Activated naive CD4-positive, alpha-beta T cell treated with anti-CD3 and anti-CD28 coated beads for 36 hours (primary cell): ENCODE measurements at regions of chr5 and their contacts with region 1.

Region 1: GRCh38 chr5:111278845-111279504 is 54.8 kb downstream of the CAMK4 start:
- DNase-seq: peak; percentile 96
- H3K4me3 Mint-ChIP-seq: peak overlapping the region; percentile 38
- H3K27ac Mint-ChIP-seq: peak overlapping the region; percentile 83
- H3K4me1 Mint-ChIP-seq: peaks cover 67% of the 10 kb centered on the region
- H3K27me3 Mint-ChIP-seq: no peaks in the 10 kb centered on the region

Region 2: DNA sequence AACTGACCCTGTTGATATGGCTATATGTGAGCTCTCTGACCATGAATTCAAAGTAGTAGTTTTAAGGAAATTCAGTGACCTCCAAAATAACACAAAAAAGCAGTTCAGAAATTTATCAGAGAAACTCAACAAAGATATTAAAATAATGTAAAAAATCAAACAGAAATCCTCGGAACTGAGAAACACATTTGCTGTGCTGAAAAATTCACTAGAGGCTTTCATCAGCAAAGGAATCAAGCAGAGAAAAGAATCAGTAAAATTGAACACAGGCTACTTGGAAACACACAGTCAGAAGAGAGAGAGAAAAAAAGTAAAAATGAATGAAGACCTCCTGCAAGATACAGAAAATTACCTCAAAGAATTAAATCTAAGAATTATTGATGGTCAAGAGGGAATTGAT is 969.8 kb before region 1 on chr5:
- CTCF ChIA-PET with region 1: no interaction called
- intact Hi-C with region 1: no loop called
- DNase-seq: no peak
- H3K4me3 Mint-ChIP-seq: no peak overlapping the region
- H3K27ac Mint-ChIP-seq: no peak overlapping the region
- H3K4me1 Mint-ChIP-seq: no peaks in the 10 kb centered on the region
- H3K27me3 Mint-ChIP-seq: peaks cover 3% of the 10 kb centered on the region

Region 3: GRCh38 chr5:110940136-110940535 is 338.8 kb before region 1 on chr5:
- CTCF ChIA-PET with region 1: no interaction called
- intact Hi-C with region 1: no loop called
- DNase-seq: no peak
- H3K4me3 Mint-ChIP-seq: no peak overlapping the region
- H3K27ac Mint-ChIP-seq: no peak overlapping the region
- H3K4me1 Mint-ChIP-seq: no peaks in the 10 kb centered on the region
- H3K27me3 Mint-ChIP-seq: peaks cover 14% of the 10 kb centered on the region

Region 4: DNA sequence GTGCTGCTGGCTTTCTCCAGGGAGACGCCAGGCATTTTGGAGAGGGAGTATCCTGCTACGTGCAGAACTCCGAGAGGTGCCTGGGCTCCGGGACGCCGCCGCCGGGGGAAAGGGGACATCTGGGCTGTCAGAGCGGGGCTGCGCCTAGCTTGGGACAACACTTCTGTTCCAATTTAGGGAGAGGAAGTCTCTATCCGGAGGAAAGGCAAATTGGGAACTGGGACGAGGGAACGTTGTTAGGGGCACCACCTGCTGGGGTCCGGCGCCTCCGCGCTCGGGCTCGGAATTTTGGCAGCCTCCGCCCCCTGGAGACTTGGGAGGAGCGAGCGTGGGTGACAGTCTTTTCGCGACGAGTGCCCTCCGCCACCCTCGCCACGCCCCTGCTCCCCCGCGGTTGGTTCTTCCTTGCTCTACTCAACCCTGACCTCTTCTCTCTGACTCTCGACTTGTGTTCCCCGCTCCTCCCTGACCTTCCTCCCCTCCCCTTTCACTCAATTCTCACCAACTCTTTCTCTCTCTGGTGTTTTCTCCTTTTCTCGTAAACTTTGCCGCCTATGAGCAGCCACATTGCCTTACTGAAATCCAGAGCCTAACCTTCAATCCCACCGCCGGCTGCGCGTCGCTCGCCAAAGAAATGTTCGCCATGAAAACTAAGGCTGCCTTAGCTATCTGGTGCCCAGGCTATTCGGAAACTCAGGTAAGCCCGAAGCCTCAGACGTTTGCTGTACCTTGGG is 205.9 kb before region 1 on chr5:
- CTCF ChIA-PET with region 1: no interaction called
- intact Hi-C with region 1: loop called (anchors 5 kb)
- DNase-seq: peak; percentile 71
- H3K4me3 Mint-ChIP-seq: peak overlapping the region; percentile 88
- H3K27ac Mint-ChIP-seq: no peak overlapping the region
- H3K4me1 Mint-ChIP-seq: peaks cover 30% of the 10 kb centered on the region
- H3K27me3 Mint-ChIP-seq: peaks cover 61% of the 10 kb centered on the region

Region 5: GRCh38 chr5:111169269-111169668 is 109.7 kb before region 1 on chr5:
- CTCF ChIA-PET with region 1: interaction called, 198 read pairs
- intact Hi-C with region 1: no loop called
- DNase-seq: no peak
- H3K4me3 Mint-ChIP-seq: no peak overlapping the region
- H3K27ac Mint-ChIP-seq: no peak overlapping the region
- H3K4me1 Mint-ChIP-seq: peaks cover 3% of the 10 kb centered on the region
- H3K27me3 Mint-ChIP-seq: no peaks in the 10 kb centered on the region

Region 6: GRCh38 chr5:111246459-111246858 is 32.5 kb before region 1 on chr5:
- CTCF ChIA-PET with region 1: interaction called, 10 read pairs
- intact Hi-C with region 1: no loop called
- DNase-seq: no peak
- H3K4me3 Mint-ChIP-seq: peak overlapping the region; percentile 64
- H3K27ac Mint-ChIP-seq: peak overlapping the region; percentile 68
- H3K4me1 Mint-ChIP-seq: peaks cover 79% of the 10 kb centered on the region
- H3K27me3 Mint-ChIP-seq: no peaks in the 10 kb centered on the region

Region 7: GRCh38 chr5:111294551-111294950 is 15.6 kb after region 1 on chr5:
- CTCF ChIA-PET with region 1: interaction called, 11 read pairs
- intact Hi-C with region 1: no loop called
- DNase-seq: no peak
- H3K4me3 Mint-ChIP-seq: no peak overlapping the region
- H3K27ac Mint-ChIP-seq: no peak overlapping the region
- H3K4me1 Mint-ChIP-seq: peaks cover 50% of the 10 kb centered on the region
- H3K27me3 Mint-ChIP-seq: no peaks in the 10 kb centered on the region

Region 8: DNA sequence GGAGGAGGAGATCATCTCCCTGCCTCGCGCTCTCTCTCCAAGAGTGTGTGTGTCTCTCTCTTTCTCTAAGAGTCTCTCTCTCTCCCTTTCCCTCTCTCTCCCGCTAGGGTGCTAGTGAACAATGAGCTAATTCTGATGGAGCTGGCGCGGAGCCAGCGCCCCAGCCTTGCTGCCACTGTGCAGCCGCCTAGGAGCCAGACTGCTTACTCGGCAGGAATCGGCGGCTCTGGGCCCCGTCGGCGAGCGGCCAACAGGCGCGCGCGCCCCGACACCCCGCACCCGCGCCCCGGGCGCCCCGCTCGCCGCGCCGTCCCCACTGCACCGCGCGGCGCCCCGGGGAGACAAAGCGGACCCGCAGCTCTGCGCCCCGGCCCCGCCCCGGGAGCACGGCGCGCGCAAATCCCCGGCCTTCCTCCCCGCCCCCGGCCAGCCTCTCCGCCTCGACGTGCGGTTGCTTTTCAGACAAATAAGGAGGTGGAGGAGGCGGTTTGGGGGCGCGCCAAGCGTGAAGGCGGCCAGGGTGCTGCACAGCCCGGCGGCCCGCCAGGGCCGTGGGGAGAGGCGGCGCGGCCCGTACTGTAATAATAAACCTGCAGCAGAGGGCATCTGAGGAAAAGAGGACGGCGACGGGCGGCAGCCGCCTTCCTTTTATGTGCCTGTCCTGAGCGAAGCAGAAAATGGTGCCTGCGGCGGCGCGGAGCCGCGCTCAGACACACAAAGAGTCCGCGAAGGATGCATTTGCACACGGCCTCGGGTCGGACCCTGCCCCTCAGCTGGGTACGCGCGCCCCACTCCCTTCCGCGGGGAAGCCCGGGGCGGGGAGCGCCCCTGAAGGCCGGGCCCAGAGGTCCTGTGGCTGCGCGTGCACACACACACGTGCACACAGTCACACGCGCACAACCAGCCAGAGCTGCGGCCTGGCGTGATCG is 478.6 kb after region 1 on chr5:
- CTCF ChIA-PET with region 1: no interaction called
- intact Hi-C with region 1: loop called (anchors 10 kb)
- DNase-seq: peak; percentile 83
- H3K4me3 Mint-ChIP-seq: peak overlapping the region; percentile 85
- H3K27ac Mint-ChIP-seq: peak overlapping the region; percentile 77
- H3K4me1 Mint-ChIP-seq: peaks cover 16% of the 10 kb centered on the region
- H3K27me3 Mint-ChIP-seq: no peaks in the 10 kb centered on the region